ENCODE measurements at regions of chr12 and their contacts with region 1.

Region 1: GRCh38 chr12:12611512-12612306 is at the start of gene CREBL2:
- DNase-seq: peak; percentile 75
- ATAC-seq: peak; percentile 91
- H3K4me3 Mint-ChIP-seq: peak within 1 kb of the TSS; percentile 94
- H3K27ac Mint-ChIP-seq: peak within 1 kb of the TSS; percentile 97
- H3K4me1 Mint-ChIP-seq: peaks cover 32% of the 10 kb centered on the region
- H3K27me3 Mint-ChIP-seq: no peaks in the 10 kb centered on the region
- CTCF ChIP-seq: no peak
- total RNA-seq, gene CREBL2: 10.1 and 10.8 TPM in 2 replicates

Region 2: DNA sequence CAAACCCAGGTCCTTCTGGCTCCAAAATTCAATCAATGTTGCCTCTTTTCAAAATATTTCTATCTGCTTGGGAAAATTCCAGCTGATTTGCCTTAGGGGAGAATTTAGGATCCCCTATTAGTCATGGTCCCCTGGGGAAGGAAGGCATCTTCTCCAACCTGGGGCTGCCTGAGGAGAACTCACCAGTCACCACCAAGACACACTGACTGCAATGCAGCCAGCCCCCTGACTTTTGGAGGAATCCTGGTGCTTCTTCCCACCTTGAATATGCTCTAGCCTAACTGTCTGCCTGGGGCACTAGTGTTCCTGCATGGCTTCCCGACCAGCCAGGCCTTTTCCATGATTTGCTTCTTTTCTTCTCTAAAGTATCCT is 612.8 kb before region 1 on chr12:
- CTCF ChIA-PET with region 1: no interaction called
- POLR2A ChIA-PET with region 1: no interaction called
- intact Hi-C with region 1: no loop called
- DNase-seq: no peak
- ATAC-seq: no peak
- H3K4me3 Mint-ChIP-seq: no peak overlapping the region
- H3K27ac Mint-ChIP-seq: no peak overlapping the region
- H3K4me1 Mint-ChIP-seq: peaks cover 2% of the 10 kb centered on the region
- H3K27me3 Mint-ChIP-seq: no peaks in the 10 kb centered on the region
- CTCF ChIP-seq: no peak

Region 3: DNA sequence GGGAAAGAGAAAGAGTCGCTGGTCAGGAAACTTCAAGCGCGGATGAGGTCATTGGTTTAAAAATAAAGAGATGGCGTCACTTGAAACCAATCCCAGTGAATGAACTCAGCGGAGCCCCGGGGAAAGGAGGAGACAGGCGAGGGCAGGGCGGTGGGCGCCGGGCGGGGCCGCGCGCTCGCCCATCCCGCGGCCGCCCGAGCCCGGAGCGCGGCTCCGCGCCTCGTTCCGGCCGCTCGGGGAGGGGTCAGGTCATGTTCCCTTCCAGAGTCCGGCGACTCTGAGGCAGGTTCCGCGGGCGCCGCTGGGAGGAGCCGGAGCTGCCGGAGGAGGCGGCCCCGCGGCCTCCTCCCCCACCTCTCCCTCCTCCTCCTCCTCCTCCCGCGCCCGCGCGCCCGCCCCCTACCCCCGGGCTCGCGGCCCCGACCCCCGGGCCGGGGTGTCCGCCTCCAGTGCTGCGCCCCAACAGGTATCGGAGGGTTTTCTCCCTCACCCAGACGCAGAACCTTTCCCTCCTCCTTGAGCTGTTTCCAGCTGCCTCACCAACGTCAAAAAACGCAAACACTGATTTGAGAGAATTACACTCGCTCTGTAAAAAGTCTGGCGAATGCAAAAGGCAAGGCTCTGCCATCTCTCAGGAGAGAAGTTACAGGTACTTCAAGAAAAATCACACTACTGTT is 49.0 kb before region 1 on chr12 and contains the start of gene DUSP16:
- CTCF ChIA-PET with region 1: no interaction called
- POLR2A ChIA-PET with region 1: no interaction called
- intact Hi-C with region 1: loop called (anchors 1 kb)
- DNase-seq: peak; percentile 65
- ATAC-seq: peak; percentile 68
- H3K4me3 Mint-ChIP-seq: peak within 1 kb of the TSS; percentile 84
- H3K27ac Mint-ChIP-seq: peak within 1 kb of the TSS; percentile 79
- H3K4me1 Mint-ChIP-seq: peaks cover 15% of the 10 kb centered on the region
- H3K27me3 Mint-ChIP-seq: peaks cover 3% of the 10 kb centered on the region
- CTCF ChIP-seq: no peak
- total RNA-seq, gene DUSP16: 1.1 and 2.0 TPM in 2 replicates

Region 4: GRCh38 chr12:12630850-12631249 is 19.1 kb after region 1 on chr12:
- CTCF ChIA-PET with region 1: no interaction called
- POLR2A ChIA-PET with region 1: interaction called, 3 read pairs
- intact Hi-C with region 1: loop called (anchors 2 kb)
- DNase-seq: no peak
- ATAC-seq: no peak
- H3K4me3 Mint-ChIP-seq: no peak overlapping the region
- H3K27ac Mint-ChIP-seq: no peak overlapping the region
- H3K4me1 Mint-ChIP-seq: peaks cover 10% of the 10 kb centered on the region
- H3K27me3 Mint-ChIP-seq: no peaks in the 10 kb centered on the region
- CTCF ChIP-seq: no peak

Region 5: DNA sequence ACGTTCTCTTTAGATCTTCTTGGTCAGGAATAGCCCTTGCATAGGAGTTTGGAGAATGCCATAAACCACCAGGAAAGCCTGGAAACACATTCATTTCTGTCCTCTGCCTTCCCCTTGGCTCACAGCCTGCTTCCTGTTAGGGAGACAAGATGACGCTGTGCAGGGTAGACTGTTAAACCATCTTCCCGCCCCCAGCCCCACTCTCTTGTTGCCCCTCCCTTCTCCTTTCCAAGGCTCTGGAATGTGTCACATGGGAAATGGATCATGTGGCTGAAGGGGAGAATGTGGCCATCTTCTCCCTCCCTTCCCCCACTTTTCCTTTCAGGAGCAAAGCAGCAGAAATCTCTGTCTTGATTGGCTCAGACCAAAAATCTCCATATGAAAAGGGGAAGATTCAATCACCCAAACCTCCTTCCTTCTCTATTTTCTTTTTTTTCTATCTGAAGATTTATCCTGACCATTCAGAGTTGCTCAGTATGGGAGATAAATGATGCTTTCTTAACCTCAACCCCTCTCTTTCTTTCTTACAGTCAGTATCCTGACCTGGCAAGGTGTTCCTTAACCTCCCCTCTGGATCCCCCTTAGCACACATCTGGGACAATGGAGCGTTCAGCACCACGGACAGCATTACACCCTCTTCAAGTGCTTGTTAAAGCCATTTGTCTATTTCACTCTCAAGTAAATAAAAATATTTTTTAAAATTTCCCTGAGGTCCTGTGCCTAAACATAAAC is 72.8 kb after region 1 on chr12:
- CTCF ChIA-PET with region 1: no interaction called
- POLR2A ChIA-PET with region 1: no interaction called
- intact Hi-C with region 1: no loop called
- DNase-seq: no peak
- ATAC-seq: no peak
- H3K4me3 Mint-ChIP-seq: no peak overlapping the region
- H3K27ac Mint-ChIP-seq: no peak overlapping the region
- H3K4me1 Mint-ChIP-seq: no peaks in the 10 kb centered on the region
- H3K27me3 Mint-ChIP-seq: no peaks in the 10 kb centered on the region
- CTCF ChIP-seq: no peak

Region 6: DNA sequence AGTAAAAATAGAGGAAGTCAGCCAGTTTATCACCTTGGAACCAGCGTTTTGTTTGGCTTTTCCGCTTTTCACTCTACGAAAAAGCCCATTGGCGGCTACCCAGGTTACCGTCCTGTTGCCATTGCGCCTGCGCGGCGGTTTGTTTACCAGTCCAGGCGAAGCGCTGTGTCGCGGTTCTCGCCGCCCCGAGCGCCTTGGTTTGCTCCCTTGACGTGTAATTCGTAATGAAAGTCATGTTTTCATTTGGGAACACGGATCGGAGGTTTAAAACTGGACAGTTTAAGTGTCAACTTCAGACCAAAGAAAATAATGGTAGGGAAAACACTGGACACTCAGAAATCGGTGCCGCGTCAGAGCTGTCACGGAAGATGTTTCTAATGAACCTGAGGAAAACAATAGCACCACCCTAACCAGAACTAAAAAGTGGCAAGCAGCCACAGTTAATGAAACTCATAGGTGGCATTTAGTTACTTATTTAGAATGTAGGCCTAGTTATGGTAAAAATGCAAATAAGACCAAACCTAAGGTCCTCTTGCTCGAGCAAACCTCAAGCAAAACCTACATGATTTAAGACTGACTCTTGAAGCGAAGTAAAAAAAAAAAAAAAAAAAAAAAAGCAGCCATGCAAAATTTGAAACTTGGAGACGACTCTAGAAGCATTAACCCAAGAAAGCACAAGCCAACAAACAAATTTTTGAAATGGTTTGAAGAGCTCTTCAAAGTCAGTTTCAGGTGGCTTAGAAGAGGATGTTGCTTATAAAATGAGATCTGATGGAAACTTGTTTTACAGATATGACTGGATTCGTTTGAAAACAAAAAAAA is 85.1 kb after region 1 on chr12:
- CTCF ChIA-PET with region 1: no interaction called
- POLR2A ChIA-PET with region 1: no interaction called
- intact Hi-C with region 1: loop called (anchors 1 kb)
- DNase-seq: peak; percentile 78
- ATAC-seq: peak; percentile 80
- H3K4me3 Mint-ChIP-seq: peak overlapping the region; percentile 96
- H3K27ac Mint-ChIP-seq: peak overlapping the region; percentile 99
- H3K4me1 Mint-ChIP-seq: peaks cover 33% of the 10 kb centered on the region
- H3K27me3 Mint-ChIP-seq: no peaks in the 10 kb centered on the region
- CTCF ChIP-seq: no peak

Region 7: DNA sequence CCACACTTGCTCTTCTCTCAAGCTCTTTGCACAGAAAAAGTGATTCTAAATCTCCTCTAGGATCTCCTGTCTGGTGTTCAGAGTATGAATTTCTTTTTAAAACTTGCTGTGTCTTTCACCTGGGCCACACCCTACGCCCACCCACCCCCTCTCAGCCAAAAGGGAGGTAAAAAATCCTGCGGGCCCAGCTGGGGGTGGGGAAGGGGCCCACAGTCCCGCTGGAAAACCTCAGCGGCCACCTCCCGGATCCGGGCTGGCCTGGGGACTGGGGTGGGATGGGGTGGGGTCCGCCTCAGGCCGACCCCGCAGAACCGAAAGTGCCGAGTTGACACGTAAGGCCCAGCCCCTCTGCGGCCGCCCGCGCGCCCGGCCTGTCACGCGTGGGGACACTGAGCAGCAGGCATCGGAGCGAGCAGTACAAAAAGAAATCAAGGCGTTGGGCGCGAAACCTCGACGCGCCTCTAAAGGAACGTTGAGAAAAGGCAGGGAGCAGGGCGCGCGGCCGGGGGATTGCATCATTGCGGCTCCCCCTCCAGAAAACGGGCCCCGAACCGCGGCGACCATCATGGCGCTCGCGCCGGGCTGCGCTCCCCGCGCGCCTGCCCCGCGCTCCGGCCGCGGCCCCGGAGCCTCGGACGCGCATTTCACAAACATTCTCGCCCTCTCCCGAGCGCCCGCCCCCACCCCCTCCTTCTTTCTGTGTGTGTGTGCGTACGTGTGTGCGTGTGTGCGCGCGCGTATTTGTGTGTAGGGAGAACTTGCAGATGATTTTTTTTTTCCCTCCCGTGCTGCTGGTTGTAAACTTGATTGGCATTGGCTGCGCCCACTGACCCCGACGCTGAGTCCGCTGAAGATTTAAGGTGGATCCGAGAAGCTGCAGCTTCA is 113.2 kb after region 1 on chr12:
- CTCF ChIA-PET with region 1: no interaction called
- POLR2A ChIA-PET with region 1: interaction called, 8 read pairs
- intact Hi-C with region 1: loop called (anchors 1 kb)
- DNase-seq: peak; percentile 81
- ATAC-seq: peak; percentile 69
- H3K4me3 Mint-ChIP-seq: peak overlapping the region; percentile 97
- H3K27ac Mint-ChIP-seq: peak overlapping the region; percentile 97
- H3K4me1 Mint-ChIP-seq: peaks cover 50% of the 10 kb centered on the region
- H3K27me3 Mint-ChIP-seq: no peaks in the 10 kb centered on the region
- CTCF ChIP-seq: no peak

Measured in activated B cell treated with CpG ODN at 0.5 μM for 24 hours (primary cell).